Dendritic cell treated with granulocyte-macrophage colony-stimulating factor and Interleukin-4, amounts not matched to agents 40 ng/mL and 50 ng/mL, for 4 days (primary cell): ENCODE measurements at regions of chr2 and their contacts with region 1.

Region 1: DNA sequence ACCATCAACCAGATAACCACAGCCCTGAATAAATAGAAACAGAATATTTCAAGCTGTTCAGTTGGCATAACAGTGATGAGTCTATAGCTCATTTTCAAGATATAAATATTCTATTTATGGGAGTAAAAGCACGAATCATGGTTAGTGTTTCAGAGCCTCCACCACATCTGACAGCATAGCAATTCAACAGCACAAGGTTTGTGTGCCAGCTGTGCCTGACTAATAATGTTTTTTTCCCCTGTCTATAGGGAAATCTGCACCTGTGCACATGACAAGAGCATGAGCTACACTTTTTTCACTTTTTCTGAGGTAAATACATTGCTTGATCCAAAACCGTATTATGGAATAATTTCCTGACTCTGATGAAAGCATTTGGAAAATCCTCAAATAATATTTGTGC is 251.3 kb downstream of the RPIA start:
- H3K4me3 Mint-ChIP-seq: no peak overlapping the region
- H3K27ac Mint-ChIP-seq: no peak overlapping the region
- H3K4me1 Mint-ChIP-seq: no peaks in the 10 kb centered on the region
- H3K27me3 Mint-ChIP-seq: no peaks in the 10 kb centered on the region

Region 2: GRCh38 chr2:88880441-88880953 is 62.3 kb before region 1 on chr2:
- intact Hi-C with region 1: loop called (anchors 5 kb)
- H3K4me3 Mint-ChIP-seq: no peak overlapping the region
- H3K27ac Mint-ChIP-seq: no peak overlapping the region
- H3K4me1 Mint-ChIP-seq: peaks cover 4% of the 10 kb centered on the region
- H3K27me3 Mint-ChIP-seq: no peaks in the 10 kb centered on the region